Posterior cingulate gyrus (tissue), 11 donors: ENCODE measurements at regions of chr15 and their contacts with region 1.

Region 1: DNA sequence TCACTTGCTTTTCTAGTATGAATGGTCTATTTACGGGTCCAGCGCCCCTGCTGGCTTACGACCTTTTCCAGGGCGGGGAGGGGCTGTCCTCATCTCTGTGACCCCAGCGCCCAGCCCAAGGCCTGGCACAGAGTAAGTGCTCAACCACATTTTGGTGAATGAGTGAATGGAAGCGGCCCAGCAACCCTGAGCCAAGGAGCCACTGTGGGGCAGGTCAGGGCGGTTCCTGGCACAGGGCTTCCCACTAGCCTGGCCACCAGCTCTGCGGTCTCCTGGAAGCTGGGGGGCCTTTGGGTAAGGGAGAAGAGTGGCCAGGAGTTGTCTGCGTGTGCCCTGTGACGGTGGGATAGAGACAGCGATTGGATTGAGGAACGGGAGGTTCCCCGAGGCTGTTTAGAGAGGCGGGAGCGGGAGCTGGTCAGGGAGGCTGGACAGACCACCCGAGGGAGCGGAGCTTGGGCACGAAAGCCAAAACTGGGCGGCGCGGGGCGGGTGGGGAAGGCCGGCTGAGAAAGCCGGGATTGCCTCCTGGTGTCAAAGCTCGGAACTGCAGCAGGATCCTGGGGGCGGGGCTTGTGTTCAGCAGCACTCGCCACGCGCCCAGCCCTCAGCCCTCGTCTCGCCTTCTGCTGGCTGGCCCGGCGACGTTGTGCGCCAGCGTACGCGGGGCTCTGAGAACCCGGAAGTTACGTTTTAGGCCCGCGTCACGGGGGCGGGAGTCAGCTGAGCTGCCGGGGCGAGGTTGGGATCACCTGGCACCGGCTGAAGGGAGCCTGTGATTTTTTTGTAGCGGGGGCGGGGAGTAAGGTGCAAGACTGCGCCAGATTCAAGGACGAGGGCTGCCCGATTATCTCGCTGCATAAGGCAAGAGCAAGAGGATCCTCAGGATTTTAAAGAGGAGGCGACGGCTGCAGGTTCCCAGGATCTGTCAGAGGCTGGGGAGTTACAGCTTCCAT is at the start of gene VPS18:
- DNase-seq: peak; percentile 99 to 100 (median 99)

Region 2: DNA sequence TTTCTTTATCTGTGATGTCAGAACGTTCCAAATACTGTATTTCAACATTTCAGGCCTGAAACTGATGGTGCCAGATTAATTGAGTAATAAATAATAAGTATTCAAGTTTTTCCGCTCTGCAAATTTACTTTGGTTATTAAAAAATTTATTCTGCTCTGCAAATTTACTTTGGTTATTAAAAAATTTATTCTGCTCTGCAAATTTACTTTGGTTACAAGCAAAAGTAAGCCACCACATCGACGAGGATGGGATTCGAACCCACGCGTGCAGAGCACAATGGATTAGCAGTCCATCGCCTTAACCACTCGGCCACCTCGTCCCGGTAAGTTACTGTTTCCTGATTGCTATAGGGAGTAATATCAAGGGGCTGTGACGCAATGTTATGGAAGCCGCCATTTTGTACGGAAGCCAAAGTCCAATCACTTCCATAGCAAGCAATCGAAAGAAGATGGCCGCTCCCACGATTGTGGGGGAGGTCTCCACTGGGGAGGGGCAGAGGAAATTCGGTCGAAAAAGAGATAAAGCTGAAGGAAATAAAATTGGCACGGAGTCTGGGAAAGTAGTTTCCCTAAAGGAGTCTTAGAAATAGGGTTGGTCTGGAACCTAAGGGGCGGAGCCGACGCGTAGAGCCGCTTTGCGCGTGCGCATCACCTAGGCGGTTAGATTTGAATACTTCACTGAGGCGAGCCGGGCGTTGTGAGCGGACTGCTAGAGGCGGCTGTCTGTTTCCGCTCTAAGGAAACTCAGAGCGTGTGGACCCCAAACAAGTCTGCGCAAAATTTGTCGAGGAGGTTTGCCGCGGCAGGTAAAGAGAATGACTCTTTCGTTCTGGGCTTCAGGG is 300.2 kb before region 1 on chr15 and contains the start of gene KNL1:
- intact Hi-C with region 1: loop called (anchors 2 kb)
- DNase-seq: peak; percentile 82 to 98 (median 92)

Region 3: DNA sequence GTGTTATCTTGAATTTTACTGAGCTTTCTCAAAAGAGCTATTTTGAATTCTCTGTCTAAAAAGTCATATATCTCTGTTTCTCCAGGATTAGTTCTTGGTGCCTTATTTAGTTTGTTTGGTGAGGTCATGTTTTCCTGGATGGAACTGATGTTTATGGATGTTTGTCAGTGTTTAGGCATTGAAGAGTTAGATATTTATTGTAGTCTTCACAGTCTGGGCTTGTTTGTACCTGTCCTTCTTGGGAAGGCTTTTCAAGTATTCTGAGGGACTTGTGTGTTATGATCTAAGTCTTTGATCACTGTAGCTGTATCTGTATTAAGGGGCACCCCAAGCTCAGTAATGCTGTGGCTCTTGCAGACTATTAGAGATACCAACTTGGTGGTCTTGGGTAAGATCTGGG is 209.6 kb before region 1 on chr15:
- intact Hi-C with region 1: loop called (anchors 5 kb)
- DNase-seq: no peak

Region 4: GRCh38 chr15:40694688-40695468 is 199.1 kb before region 1 on chr15 and contains the start of gene RAD51:
- intact Hi-C with region 1: loop called (anchors 5 kb)
- DNase-seq: peak; percentile 81 to 99 (median 90)

Region 5: GRCh38 chr15:40754883-40755811 is 138.9 kb before region 1 on chr15 and contains the start of gene RMDN3:
- intact Hi-C with region 1: loop called (anchors 2 kb)
- DNase-seq: peak; percentile 81 to 99 (median 90)

Region 6: GRCh38 chr15:40807028-40807887 is 86.8 kb before region 1 on chr15 and contains the starts of genes DNAJC17 and ZFYVE19:
- intact Hi-C with region 1: loop called (anchors 2 kb)
- DNase-seq: peak; percentile 95 to 100 (median 98)

Region 7: DNA sequence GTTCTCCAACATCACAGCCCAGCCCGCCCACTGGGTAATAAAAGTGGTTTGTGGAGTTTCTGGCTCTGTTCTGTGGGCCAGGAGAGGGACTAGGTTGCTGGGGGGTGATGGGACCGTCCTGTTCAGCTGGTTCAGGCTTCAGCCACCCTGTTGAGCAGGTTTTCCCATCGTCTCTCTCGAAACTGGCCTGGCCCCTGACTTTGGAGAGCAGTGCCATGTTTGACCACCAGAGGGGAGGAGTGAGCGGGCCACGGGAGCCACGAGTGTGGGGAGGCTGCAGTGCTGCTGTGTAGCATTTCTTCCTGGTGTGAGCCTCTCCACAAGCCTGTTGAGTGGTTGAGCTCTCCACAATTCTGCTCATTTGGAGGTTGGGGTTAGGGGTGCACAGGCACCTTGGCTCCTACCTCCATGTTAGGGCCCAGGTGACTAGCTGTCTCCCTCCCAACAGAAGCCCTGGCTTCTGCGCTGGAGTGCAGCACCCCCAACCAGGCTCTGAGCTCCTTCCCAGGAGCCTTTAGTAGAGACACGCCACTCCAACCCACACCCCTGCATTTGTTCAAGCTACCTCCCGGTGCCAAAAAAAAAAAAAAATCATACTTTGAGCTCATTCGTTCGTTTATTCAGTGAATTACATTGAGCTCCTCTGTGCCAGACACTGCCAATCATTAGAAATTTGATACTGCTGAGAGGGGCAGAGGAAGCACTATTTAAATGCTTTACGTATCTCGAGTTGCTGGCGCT is 36.2 kb before region 1 on chr15:
- intact Hi-C with region 1: loop called (anchors 2 kb)
- DNase-seq: peak; percentile 48 to 96 (median 76)